ENCODE measurements at regions of chr18 and their contacts with region 1.

Region 1: DNA sequence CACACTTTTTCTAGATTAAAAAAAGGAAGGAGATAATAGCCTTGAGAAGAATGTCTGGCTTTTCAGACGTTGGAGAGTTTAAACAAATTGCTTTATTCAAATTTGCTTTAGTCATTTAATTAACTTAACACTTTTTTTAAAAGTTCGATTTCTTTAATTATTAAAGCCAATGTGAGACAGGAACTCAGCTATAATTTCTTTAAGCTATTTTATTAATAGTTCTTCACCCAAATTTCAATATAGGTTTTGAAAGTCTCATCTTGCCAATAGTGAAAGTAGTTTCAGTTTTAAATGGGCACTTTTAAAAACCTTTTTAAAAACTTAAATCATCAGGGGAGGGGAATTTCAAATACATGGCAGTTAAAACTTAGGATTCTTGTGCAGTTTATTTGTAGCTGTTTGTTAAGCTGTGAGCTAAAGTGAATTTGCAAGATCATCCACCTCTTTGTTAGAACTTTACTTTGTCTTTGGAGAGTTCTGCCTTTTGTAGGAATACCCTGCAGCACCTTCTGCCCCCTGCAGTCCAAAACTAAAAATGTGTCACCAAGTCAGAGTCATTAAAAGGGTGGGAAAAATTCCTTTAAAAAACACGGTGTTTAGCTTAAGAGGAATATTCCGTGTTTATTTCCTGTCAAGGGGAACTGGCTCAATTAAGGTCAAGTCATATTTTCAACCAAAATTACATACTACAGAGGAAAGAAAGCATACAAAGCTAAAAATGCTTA is 4.6 kb downstream of the TGIF1 start:
- DNase-seq: no peak
- H3K4me3 ChIP-seq: peak overlapping the region in 3 of 4 donors; percentile 67 to 81 (median 74)
- H3K27ac ChIP-seq: peak overlapping the region; percentile 97 to 100 (median 99)
- H3K4me1 ChIP-seq: peaks cover 0 to 55% (median 33%) of the 10 kb centered on the region in 4 donors
- H3K27me3 ChIP-seq: no peaks in the 10 kb centered on the region
- CTCF ChIP-seq: peak in 3 of 4 experiments; percentile 69 to 73 (median 71)
- EP300 ChIP-seq: no peak
- POLR2A ChIP-seq: no peak

Region 2: GRCh38 chr18:3281456-3282400 is 172.8 kb before region 1 on chr18:
- intact Hi-C with region 1: loop called (anchors 2 kb)
- DNase-seq: no peak
- H3K4me3 ChIP-seq: no peak overlapping the region
- H3K27ac ChIP-seq: peak overlapping the region in 3 of 4 donors; percentile 24 to 36 (median 34)
- H3K4me1 ChIP-seq: no peaks in the 10 kb centered on the region
- H3K27me3 ChIP-seq: no peaks in the 10 kb centered on the region
- CTCF ChIP-seq: peak; percentile 42 to 61 (median 53)
- EP300 ChIP-seq: no peak
- POLR2A ChIP-seq: no peak

Region 3: GRCh38 chr18:3481696-3482210 is 27.2 kb after region 1 on chr18:
- intact Hi-C with region 1: no loop called
- DNase-seq: no peak
- H3K4me3 ChIP-seq: no peak overlapping the region
- H3K27ac ChIP-seq: no peak overlapping the region
- H3K4me1 ChIP-seq: no peaks in the 10 kb centered on the region
- H3K27me3 ChIP-seq: no peaks in the 10 kb centered on the region
- CTCF ChIP-seq: peak in 1 of 4 experiments; percentile 18
- EP300 ChIP-seq: no peak
- POLR2A ChIP-seq: no peak

Measured in sigmoid colon (tissue), 7 donors.